SK-MEL-5 (cell line): ENCODE measurements at regions of chr9 and their contacts with region 1.

Region 1: GRCh38 chr9:71683598-71684235 is 84.6 kb downstream of the CEMIP2 start:
- DNase-seq: peak; percentile 59

Region 2: DNA sequence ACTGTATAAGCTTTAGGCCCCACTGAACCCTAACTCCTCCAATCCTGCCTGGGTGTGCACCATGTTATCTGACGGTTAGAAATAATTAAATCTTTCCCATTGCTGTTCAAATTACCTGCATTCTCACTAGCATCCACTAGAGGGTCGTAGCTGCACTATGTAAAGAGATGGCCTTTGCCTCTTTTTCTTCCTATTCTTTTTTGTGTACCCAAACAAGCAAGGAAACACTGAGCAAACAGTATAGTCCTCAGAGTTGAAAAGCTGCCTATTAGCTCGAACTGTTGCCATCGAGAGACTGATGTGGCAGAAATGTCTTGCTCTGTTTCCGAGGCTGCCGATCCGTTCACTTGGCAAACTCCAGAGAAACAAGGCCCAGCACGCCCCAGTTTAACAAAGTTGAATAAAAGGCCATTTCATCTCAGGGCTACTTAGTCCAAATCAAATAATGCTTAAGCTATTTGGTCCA is 398.5 kb before region 1 on chr9:
- in situ Hi-C with region 1: loop called (anchors 25 kb)
- DNase-seq: peak; percentile 83

Region 3: DNA sequence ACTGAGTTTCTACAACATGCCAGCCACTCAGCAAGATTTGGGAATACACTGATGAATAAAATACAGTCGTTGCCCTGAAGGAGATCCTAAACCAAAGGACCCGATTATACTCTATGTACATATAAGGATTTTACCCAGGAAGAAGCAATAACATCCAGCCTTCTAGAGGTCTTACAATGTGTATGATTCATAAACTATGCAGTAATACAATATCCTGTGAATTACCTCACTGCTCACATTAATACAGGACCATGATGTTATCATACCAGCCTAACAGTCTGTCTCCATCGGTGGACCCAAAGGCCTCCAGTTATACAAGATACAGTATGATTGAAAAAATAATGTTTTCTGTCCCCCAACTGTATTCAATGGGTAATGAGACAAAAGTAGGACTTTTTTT is 251.8 kb before region 1 on chr9:
- in situ Hi-C with region 1: no loop called
- DNase-seq: no peak

Region 4: DNA sequence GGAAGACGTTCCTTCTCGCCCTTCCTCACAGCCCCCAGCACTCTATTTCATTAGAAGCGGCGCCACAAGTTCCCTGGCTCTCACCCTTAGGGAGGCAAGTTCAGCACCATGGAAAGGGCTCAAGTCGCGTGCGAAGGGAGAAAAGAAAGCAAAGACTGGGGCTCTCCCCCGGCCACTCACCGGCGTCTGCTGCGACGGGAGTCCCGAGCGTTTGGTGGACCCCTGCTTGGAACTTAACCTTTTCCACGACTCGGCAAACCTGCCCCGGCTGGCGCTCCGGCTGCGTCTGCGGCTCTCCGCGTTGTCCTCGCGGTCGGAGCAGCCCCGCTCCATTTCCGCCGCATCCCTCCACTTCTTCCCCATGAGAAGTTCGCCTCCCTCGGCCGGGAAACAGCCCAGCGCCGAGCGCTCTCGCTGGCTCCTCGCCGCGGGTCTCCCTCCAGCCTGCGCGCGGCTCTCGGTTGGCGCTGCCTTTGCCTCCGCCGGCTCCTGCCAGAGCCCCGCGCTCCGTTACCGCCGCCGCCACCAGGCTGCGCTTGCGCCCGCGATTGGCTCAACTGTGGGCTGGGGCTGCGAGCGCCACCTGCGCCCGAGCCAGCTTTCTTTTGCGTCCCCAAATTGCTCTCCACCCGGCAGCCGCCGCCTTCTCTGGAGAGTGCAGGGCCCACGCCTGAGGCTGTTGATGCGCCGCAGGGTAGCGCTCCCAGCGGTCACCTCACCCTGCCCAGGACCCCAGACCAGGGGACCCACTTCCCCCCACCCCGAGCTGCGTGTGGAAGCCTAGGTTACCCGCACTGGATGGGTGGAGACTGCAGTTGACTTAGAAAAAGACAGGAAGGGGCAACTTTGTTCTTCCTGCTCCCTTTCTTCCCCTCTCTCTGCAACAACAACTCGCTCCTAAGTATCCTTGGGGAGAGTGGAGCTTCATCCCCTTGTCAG is 237.0 kb before region 1 on chr9:
- in situ Hi-C with region 1: no loop called
- DNase-seq: peak; percentile 49

Region 5: GRCh38 chr9:71571186-71571585 is 112.5 kb before region 1 on chr9:
- in situ Hi-C with region 1: no loop called
- DNase-seq: no peak

Region 6: DNA sequence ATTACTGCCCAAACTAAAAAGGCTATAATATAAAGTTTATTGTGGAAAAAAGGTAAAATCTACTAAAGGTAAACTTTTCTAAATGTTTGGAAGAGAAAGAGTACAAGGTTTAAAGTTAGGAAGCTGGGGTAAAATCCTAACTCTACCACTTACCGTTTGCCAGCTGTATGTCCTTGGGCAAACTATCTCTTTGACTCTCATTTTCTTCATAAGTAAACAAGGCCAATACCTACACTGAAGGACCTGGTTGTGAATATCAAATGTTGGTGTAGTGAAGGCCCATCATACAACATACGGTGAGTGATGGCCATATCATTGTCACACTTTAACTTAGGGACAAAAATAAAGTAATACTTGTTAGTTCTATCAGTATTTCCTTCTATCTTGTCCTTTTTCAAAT is 192.4 kb after region 1 on chr9:
- in situ Hi-C with region 1: no loop called
- DNase-seq: no peak